Right ventricle myocardium superior (tissue), 1 donor: ENCODE measurements at regions of chr17 and their contacts with region 1.

Region 1: DNA sequence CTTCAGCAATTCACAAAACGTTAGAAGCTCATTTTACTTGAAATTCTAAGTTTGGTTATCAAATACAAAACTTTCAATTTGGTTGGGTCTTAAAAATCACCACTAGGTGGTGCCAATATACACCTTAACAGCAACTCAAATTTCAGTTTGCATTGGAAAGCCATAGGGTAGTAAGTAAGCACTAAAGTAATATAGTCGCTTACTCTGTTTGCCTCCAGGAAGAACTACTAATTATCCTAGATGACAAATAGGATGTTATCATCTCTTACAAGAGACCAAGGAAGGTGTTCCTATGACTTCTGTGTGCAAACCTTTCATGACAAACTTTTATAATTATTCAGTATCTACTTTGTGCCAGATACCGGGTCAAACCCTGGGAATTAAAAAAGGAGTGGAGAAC is 93.3 kb downstream of the MYO1D start:
- DNase-seq: no peak
- ATAC-seq: peak; percentile 58

Region 2: GRCh38 chr17:32819035-32819434 is 35.4 kb after region 1 on chr17:
- intact Hi-C with region 1: no loop called
- DNase-seq: no peak
- ATAC-seq: peak; percentile 63

Region 3: DNA sequence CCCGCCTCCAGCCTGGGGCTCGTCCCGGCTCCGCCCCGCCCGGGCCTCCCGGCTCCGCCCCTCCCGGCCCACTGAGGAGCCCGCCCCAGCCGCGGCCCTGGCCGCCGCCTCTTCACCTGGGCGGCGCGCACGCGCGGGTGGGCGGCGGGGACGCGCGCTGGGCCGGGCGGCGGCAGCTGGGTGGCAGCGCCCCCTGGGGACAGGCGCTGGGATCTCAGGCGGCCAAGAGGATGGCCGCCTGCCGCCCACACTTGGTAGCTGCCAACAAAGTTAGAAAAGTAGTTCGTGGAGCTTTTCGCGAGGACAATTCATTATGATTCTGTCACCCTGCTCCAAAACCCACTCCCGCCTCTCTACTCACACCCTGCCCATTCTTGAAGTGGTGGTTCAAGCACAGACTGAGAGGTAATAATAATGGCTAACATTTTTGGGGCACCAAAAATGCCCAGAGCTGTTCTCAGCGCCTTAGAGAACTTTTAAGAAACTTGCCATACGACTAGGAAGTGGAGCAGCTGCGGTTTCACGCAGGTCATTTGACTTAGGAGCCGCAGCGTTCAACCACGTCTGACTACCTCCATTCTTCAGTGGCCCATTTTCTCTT is 93.7 kb after region 1 on chr17:
- intact Hi-C with region 1: loop called (anchors 5 kb)
- DNase-seq: peak; percentile 95
- ATAC-seq: peak; percentile 100

Region 4: GRCh38 chr17:32909787-32910369 is 126.3 kb after region 1 on chr17:
- intact Hi-C with region 1: loop called (anchors 10 kb)
- DNase-seq: no peak
- ATAC-seq: peak; percentile 87